Right ventricle myocardium inferior (tissue), 1 donor: ENCODE measurements at regions of chr7 and their contacts with region 1.

Region 1: GRCh38 chr7:30740424-30741181 is 11.3 kb upstream of the INMT start:
- DNase-seq: peak; percentile 89
- ATAC-seq: peak; percentile 54

Region 2: GRCh38 chr7:30625283-30625682 is 115.3 kb before region 1 on chr7:
- intact Hi-C with region 1: loop called (anchors 5 kb)
- DNase-seq: no peak
- ATAC-seq: no peak

Region 3: GRCh38 chr7:30682212-30683083 is 58.2 kb before region 1 on chr7 and contains the start of gene CRHR2:
- intact Hi-C with region 1: loop called (anchors 1 kb)
- DNase-seq: peak; percentile 62
- ATAC-seq: peak; percentile 60
- total RNA-seq, gene CRHR2: 0.35 TPM

Region 4: GRCh38 chr7:30708976-30709375 is 31.6 kb before region 1 on chr7:
- intact Hi-C with region 1: no loop called
- DNase-seq: no peak
- ATAC-seq: peak; percentile 85

Region 5: GRCh38 chr7:30791114-30791779 is 50.6 kb after region 1 on chr7:
- intact Hi-C with region 1: loop called (anchors 1 kb)
- DNase-seq: no peak
- ATAC-seq: no peak

Region 6: GRCh38 chr7:30974605-30975255 is 234.1 kb after region 1 on chr7:
- intact Hi-C with region 1: loop called (anchors 5 kb)
- DNase-seq: no peak
- ATAC-seq: peak; percentile 69

Region 7: GRCh38 chr7:31122649-31123058 is 382.1 kb after region 1 on chr7:
- intact Hi-C with region 1: loop called (anchors 5 kb)
- DNase-seq: no peak
- ATAC-seq: peak; percentile 72